ENCODE measurements at regions of chr11 and their contacts with region 1.

Region 1: GRCh38 chr11:86990515-86990914 is 35.3 kb upstream of the FZD4 start:
- DNase-seq: no peak
- ATAC-seq: no peak
- H3K4me3 ChIP-seq: no peak overlapping the region
- H3K27ac ChIP-seq: no peak overlapping the region
- H3K4me1 ChIP-seq: peaks cover 2 to 28% (median 14%) of the 10 kb centered on the region in 9 donors
- H3K27me3 ChIP-seq: no peaks in the 10 kb centered on the region
- CTCF ChIP-seq: no peak

Region 2: DNA sequence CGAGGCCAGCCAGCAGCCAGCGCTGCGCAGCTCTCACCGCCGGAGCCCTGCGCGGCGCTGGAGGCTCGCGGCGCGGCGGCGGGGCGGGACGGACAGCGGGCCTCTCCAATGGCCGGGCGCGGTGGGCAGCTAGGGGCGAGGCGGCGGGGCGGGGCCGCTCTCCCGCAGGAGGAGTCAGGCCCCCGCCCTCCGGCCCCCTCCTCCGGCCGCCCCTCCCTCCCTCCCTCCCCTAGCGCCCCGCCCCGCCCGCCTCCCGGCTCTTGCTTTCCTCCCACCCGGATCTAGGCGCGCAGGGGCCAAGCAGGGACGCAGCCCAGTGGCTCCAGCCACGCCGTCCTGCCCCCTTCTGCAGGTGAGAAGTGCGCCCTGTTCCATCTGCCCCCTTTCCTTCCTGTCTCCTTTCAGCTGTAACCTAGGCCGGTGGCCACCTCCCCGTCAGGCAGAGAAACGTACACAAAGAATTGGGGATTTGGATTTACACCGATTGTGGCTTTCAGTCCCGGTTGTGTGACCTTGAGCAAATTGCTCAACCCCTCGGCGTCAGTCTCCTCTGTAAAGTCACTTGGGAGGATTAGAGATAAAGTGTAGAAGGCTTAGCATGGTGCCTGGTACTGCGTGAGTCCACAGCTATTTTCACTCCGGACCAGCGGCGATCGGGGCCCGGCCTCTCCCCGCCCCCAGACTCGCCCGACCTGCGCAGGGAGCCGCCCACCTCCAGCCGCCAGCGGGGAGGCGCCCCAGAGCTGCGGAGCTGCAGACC is 35.0 kb before region 1 on chr11 and contains the start of gene FZD4:
- intact Hi-C with region 1: loop called in 3 of 10 experiments (anchors 5 kb)
- DNase-seq: peak; percentile 92 to 94
- ATAC-seq: peak; percentile 89 to 97 (median 92)
- H3K4me3 ChIP-seq: peak within 1 kb of the TSS; percentile 84 to 100 (median 98)
- H3K27ac ChIP-seq: peak within 1 kb of the TSS; percentile 86 to 100 (median 98)
- H3K4me1 ChIP-seq: peaks cover 2 to 59% (median 43%) of the 10 kb centered on the region in 9 donors
- H3K27me3 ChIP-seq: peaks cover 0 to 36% (median 0%) of the 10 kb centered on the region in 7 donors
- CTCF ChIP-seq: peak in 8 of 9 donors; percentile 36 to 73 (median 44)
- total RNA-seq, gene FZD4: 17.8 to 34.6 (median 23.7) TPM

Region 3: DNA sequence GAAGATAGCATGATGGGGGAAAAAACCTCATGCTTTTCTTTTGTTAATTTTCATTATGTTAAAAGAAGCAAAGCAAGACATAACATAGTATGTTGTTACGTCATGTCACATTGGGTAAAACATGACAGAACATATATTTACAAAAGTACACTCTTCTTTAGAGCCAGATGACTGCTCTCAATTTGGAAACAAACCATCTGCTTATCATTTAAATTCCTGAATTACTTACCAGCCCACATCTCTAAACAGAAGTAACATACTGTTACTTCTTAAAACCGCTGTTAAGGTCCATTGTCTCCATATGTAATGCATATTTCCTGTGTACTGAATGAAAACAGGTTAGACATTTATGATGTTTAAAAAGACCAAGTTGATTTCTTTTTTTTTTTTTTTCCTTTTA is 147.2 kb after region 1 on chr11:
- intact Hi-C with region 1: no loop called
- DNase-seq: no peak
- ATAC-seq: no peak
- H3K4me3 ChIP-seq: no peak overlapping the region
- H3K27ac ChIP-seq: no peak overlapping the region
- H3K4me1 ChIP-seq: peaks cover 0 to 7% (median 0%) of the 10 kb centered on the region in 9 donors
- H3K27me3 ChIP-seq: no peaks in the 10 kb centered on the region
- CTCF ChIP-seq: no peak

Region 4: GRCh38 chr11:87281496-87281895 is 291.0 kb after region 1 on chr11:
- intact Hi-C with region 1: loop called in 1 of 10 experiments (anchors 5 kb)
- DNase-seq: peak in 1 of 2 donors; percentile 24
- ATAC-seq: peak in 7 of 8 donors; percentile 57 to 90 (median 84)
- H3K4me3 ChIP-seq: no peak overlapping the region
- H3K27ac ChIP-seq: peak overlapping the region in 1 of 10 donors; percentile 11
- H3K4me1 ChIP-seq: peaks cover 0 to 25% (median 5%) of the 10 kb centered on the region in 9 donors
- H3K27me3 ChIP-seq: no peaks in the 10 kb centered on the region
- CTCF ChIP-seq: peak; percentile 14 to 69 (median 43)